Calu3 (cell line): ENCODE measurements at regions of chr2 and their contacts with region 1.

Region 1: DNA sequence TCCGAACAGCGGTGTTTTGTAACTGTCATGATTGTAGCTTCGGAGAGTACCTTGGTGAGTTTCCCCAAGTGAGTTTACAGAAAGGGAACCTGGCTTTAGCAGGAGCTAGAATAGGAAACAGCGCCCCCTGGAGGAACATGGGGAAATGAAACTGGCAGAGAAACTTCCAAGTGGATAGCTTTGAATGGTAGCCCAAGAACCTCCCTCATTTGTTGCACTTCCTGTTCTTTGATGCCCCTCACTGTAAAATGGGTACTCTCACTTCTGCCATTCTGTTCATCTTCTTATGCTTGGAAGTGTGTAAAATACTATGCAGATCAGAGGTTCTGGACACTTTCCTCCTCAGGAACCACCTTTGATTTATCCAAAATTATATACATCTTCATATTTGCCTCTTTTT is 36.2 kb downstream of the CHST10 start:
- DNase-seq: peak; percentile 90
- H3K4me3 Mint-ChIP-seq: no peak overlapping the region
- H3K27ac Mint-ChIP-seq: no peak overlapping the region
- H3K4me1 Mint-ChIP-seq: no peaks in the 10 kb centered on the region
- H3K27me3 Mint-ChIP-seq: no peaks in the 10 kb centered on the region
- CTCF ChIP-seq: peak; percentile 84

Region 2: DNA sequence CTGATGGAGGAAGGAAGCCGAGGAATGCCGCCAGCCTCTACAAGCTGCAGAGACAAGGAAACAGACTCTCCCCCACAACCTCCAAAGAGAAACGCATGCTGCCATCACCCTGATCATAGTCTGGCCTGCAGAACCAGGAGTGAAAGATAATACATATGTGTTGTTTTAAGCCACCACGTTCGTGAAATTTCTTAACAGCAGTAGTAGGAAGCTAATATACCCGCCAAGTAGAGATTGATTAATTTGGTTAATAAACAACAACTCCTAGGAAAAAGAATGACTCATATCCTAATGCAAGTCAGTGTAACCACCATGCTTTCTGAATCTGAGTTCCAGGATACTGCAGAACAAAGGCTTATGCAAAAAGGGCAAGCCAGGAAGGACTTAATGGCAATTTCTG is 95.5 kb before region 1 on chr2:
- CTCF ChIA-PET with region 1: interaction called, 11 read pairs
- intact Hi-C with region 1: no loop called
- DNase-seq: peak; percentile 45
- H3K4me3 Mint-ChIP-seq: peak overlapping the region; percentile 27
- H3K27ac Mint-ChIP-seq: peak overlapping the region; percentile 98
- H3K4me1 Mint-ChIP-seq: peaks cover 35% of the 10 kb centered on the region
- H3K27me3 Mint-ChIP-seq: no peaks in the 10 kb centered on the region
- CTCF ChIP-seq: no peak

Region 3: DNA sequence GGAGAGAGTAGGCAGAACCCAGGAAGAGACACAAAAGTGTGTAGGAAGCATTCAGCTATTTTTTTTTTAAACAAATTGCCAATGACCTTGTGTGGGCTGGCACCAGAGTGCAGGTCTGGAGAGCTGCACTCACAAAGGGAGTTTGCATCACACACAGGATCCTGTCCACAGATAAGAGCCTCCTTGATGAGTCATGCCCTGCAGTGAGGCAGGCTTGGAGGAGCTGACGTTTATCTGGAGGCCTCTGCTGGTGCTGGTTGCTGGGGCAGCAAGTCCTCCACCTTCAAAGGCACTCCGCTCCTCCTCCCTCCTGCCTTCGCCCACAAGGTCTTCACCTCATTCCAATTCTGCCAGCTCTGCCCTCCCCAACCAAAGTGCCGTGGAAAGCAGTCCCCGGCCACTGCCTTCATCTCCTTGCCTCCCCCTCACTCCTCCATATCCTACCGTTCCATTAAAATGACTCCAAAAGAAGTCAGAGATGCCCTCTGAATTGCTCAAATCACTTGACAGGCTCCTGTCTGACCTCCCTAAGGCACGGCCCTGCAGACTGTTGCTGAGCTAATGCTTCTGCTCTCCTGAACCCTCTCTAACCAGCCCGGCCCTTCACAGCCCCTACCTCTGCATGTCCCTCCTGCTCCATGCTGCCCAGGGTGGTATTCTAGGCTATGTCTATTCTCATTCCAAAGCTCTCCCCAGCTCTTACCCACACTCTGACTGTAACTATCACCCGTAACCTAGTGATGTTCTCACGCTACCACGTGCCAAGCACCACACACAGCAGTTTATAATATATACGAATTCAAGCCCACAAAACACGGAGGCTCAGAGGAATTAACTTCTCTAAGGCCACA is 89.9 kb before region 1 on chr2:
- CTCF ChIA-PET with region 1: interaction called, 11 read pairs
- intact Hi-C with region 1: no loop called
- DNase-seq: peak; percentile 85
- H3K4me3 Mint-ChIP-seq: no peak overlapping the region
- H3K27ac Mint-ChIP-seq: no peak overlapping the region
- H3K4me1 Mint-ChIP-seq: peaks cover 5% of the 10 kb centered on the region
- H3K27me3 Mint-ChIP-seq: no peaks in the 10 kb centered on the region
- CTCF ChIP-seq: no peak

Region 4: DNA sequence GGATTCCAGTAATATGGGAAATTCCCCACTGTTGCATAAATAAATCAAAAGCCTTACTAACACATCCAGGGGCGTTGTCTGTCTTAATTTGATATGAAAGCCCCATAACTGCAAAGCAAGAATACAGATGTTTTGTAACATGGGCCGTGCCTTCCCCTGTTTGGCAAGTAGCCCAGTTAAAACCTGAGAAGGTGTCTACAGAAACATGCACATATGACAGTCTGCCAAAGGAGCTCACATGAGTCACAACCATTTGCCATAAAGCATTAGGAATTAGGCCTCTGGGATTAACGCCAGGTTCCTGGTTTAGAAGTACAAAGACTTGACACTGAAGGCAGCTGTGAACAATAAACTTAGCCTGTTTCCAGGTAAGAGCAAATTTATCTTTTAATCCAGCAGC is 15.8 kb before region 1 on chr2:
- CTCF ChIA-PET with region 1: interaction called, 11 read pairs
- intact Hi-C with region 1: no loop called
- DNase-seq: peak; percentile 82
- H3K4me3 Mint-ChIP-seq: no peak overlapping the region
- H3K27ac Mint-ChIP-seq: peak overlapping the region; percentile 54
- H3K4me1 Mint-ChIP-seq: peaks cover 18% of the 10 kb centered on the region
- H3K27me3 Mint-ChIP-seq: no peaks in the 10 kb centered on the region
- CTCF ChIP-seq: no peak

Region 5: GRCh38 chr2:100482741-100483140 is 101.5 kb after region 1 on chr2:
- CTCF ChIA-PET with region 1: no interaction called
- intact Hi-C with region 1: no loop called
- DNase-seq: peak; percentile 7
- H3K4me3 Mint-ChIP-seq: no peak overlapping the region
- H3K27ac Mint-ChIP-seq: no peak overlapping the region
- H3K4me1 Mint-ChIP-seq: no peaks in the 10 kb centered on the region
- H3K27me3 Mint-ChIP-seq: peaks cover 97% of the 10 kb centered on the region
- CTCF ChIP-seq: no peak